Stomach (tissue), 19 donors: ENCODE measurements at regions of chr3 and their contacts with region 1.

Region 1: GRCh38 chr3:136390574-136390973 is 140.4 kb downstream of the PCCB start:
- DNase-seq: no peak
- H3K4me3 ChIP-seq: no peak overlapping the region
- H3K27ac ChIP-seq: no peak overlapping the region
- H3K4me1 ChIP-seq: peaks cover 0 to 18% (median 3%) of the 10 kb centered on the region in 4 donors
- H3K27me3 ChIP-seq: no peaks in the 10 kb centered on the region
- CTCF ChIP-seq: no peak
- EP300 ChIP-seq: no peak
- POLR2A ChIP-seq: no peak

Region 2: DNA sequence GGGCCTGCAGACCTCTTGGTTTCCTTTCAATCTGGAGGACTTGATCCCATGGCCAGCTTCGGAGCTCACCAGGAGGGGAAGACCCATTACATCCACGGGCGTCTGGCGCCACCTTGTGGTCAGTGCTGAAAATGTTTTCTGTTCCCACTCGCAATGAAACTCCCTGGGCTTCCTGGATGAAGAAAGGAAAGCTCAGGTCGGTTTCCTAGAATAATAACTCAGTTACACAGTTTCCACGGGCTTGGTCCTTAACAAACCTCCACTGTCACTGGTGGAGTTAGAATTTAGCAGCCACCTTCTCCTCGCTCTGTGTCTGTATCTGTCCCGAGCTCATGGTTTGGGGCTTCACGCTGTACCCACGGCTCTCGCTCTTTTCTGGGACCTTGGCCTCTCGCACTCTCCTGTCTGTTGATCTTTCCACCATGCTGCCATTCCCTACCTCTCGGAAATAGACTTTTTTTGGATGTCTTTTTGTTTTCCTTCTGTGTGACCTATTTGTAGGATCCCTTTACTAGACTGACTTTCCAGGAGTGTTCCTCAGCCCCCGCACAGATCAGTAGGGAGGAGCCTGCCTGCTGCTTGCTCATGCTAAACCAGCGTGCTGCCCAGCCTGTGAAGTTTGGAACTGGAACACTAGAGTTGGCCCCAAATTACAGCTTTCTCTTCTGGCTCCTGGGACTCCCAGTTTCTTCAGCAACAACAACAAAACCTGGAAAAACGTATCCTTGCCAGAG is 623.5 kb after region 1 on chr3:
- intact Hi-C with region 1: loop called (anchors 5 kb)
- DNase-seq: peak; percentile 94 to 96
- H3K4me3 ChIP-seq: peak overlapping the region; percentile 45 to 54 (median 48)
- H3K27ac ChIP-seq: peak overlapping the region; percentile 52 to 82 (median 67)
- H3K4me1 ChIP-seq: peaks cover 0 to 10% (median 3%) of the 10 kb centered on the region in 4 donors
- H3K27me3 ChIP-seq: no peaks in the 10 kb centered on the region
- CTCF ChIP-seq: peak in 6 of 7 experiments; percentile 21 to 95 (median 89)
- EP300 ChIP-seq: no peak
- POLR2A ChIP-seq: no peak